BJ (cell line): ENCODE measurements at regions of chr6 and their contacts with region 1.

Region 1: DNA sequence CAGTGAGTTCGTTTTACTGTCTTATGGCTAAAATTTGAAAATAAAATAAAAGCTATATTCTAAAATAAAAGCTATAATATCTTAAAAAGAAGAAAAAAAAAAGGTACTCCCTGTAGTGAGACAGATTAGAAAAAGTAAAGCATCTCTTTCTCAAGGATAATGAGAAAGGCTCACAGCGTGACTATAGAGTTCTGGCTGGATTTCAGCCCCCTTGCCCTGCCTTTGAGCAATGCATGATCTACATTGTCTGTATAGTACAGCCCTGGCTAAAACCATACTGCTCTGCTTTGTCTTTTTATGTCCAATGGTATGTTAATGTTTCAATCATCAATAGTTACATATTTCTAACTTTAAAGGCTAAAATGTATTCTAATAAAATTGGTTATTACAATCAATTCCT is 91.2 kb downstream of the PRSS35 start:
- DNase-seq: no peak
- H3K4me3 ChIP-seq: no peak overlapping the region
- H3K27me3 ChIP-seq: no peaks in the 10 kb centered on the region
- CTCF ChIP-seq: no peak

Region 2: DNA sequence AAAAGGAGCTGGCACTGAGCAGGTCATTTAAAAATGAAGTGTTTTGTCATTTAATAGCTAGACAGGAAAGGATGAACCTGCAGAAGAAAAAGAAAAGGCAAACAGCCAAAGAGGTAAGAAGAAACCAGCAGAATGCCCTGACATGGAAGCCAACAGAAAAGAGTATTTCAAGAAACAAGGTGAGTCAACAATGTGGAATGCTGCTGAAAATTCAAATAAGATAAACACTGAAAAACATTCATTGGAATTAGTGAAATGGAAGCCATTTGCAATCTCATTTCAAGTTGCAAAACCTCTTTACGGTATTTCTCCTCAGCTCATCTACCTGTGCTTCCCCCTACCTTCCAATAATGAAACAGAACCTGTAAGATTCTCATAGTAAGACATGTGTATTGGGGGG is 350.8 kb before region 1 on chr6:
- CTCF ChIA-PET with region 1: no interaction called
- POLR2A ChIA-PET with region 1: no interaction called
- DNase-seq: no peak
- H3K4me3 ChIP-seq: no peak overlapping the region
- H3K27me3 ChIP-seq: no peaks in the 10 kb centered on the region
- CTCF ChIP-seq: no peak

Region 3: GRCh38 chr6:83615025-83615999 is 11.8 kb after region 1 on chr6:
- CTCF ChIA-PET with region 1: interaction called, 11 read pairs
- POLR2A ChIA-PET with region 1: interaction called, 3 read pairs
- DNase-seq: no peak
- H3K4me3 ChIP-seq: no peak overlapping the region
- H3K27me3 ChIP-seq: no peaks in the 10 kb centered on the region
- CTCF ChIP-seq: peak; percentile 72